ENCODE measurements at regions of chr1 and their contacts with region 1.

Region 1: GRCh38 chr1:36342481-36343478 is 19.3 kb upstream of the EVA1B start:
- DNase-seq: peak in 2 of 6 donors; percentile 36 to 52
- ATAC-seq: peak in 3 of 4 donors; percentile 64 to 84 (median 73)
- H3K4me3 ChIP-seq: no peak overlapping the region
- H3K27ac ChIP-seq: no peak overlapping the region
- H3K4me1 ChIP-seq: no peaks in the 10 kb centered on the region
- H3K27me3 ChIP-seq: no peaks in the 10 kb centered on the region
- CTCF ChIP-seq: peak in 2 of 4 donors; percentile 21 to 27

Region 2: GRCh38 chr1:36411674-36412520 is 69.1 kb after region 1 on chr1:
- intact Hi-C with region 1: loop called in 2 of 3 experiments (anchors 5 to 10 kb)
- DNase-seq: no peak
- ATAC-seq: peak in 3 of 4 donors; percentile 55 to 81 (median 56)
- H3K4me3 ChIP-seq: no peak overlapping the region
- H3K27ac ChIP-seq: no peak overlapping the region
- H3K4me1 ChIP-seq: no peaks in the 10 kb centered on the region
- H3K27me3 ChIP-seq: no peaks in the 10 kb centered on the region
- CTCF ChIP-seq: no peak

Region 3: DNA sequence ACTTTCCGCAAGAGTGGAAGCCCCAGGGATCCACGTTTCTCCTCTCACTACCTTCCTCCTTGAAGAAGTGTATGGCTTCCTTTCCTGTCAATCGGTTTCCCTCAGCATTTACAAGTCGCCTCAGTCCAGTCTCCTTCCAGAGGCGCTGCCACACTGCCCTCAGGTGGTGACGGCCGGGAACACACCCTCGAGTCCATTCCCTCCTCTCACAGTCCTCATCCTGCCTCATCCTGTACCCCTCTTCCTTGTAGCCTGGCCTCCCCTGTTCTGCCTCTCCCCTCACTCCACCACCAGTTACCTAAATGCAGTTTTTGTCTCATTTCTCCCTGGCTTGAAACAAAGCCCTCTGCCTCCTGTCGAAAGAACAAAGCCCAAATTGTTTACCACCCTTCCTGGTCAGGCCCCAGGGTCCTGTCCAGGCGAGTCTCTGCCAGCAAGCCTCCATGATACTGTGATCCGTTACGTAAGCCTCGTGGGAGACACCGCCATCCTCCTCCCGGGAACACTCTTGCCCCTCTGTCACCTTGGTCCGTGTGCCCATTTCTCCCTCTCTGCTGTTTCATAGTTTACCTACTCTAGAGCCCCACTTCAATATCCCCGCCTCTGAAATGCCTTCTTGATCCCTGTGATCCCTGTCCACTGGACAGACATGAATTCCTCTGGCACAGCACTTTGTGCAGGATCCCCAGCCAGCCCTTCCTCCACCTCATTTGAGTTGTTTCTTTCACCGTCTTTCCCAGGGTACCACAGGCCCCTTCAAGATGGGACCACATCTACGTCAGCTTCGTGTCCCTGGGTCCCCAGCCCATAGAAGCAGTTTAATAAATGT is 78.3 kb after region 1 on chr1:
- intact Hi-C with region 1: loop called in 2 of 3 experiments (anchors 5 to 10 kb)
- DNase-seq: peak; percentile 67 to 98 (median 87)
- ATAC-seq: peak; percentile 93 to 100 (median 98)
- H3K4me3 ChIP-seq: no peak overlapping the region
- H3K27ac ChIP-seq: no peak overlapping the region
- H3K4me1 ChIP-seq: peaks cover 0 to 5% (median 0%) of the 10 kb centered on the region in 3 donors
- H3K27me3 ChIP-seq: no peaks in the 10 kb centered on the region
- CTCF ChIP-seq: peak; percentile 81 to 89 (median 83)

Measured in pancreas (tissue), 10 donors.